PC-9 (cell line): ENCODE measurements at regions of chr6 and their contacts with region 1.

Region 1: DNA sequence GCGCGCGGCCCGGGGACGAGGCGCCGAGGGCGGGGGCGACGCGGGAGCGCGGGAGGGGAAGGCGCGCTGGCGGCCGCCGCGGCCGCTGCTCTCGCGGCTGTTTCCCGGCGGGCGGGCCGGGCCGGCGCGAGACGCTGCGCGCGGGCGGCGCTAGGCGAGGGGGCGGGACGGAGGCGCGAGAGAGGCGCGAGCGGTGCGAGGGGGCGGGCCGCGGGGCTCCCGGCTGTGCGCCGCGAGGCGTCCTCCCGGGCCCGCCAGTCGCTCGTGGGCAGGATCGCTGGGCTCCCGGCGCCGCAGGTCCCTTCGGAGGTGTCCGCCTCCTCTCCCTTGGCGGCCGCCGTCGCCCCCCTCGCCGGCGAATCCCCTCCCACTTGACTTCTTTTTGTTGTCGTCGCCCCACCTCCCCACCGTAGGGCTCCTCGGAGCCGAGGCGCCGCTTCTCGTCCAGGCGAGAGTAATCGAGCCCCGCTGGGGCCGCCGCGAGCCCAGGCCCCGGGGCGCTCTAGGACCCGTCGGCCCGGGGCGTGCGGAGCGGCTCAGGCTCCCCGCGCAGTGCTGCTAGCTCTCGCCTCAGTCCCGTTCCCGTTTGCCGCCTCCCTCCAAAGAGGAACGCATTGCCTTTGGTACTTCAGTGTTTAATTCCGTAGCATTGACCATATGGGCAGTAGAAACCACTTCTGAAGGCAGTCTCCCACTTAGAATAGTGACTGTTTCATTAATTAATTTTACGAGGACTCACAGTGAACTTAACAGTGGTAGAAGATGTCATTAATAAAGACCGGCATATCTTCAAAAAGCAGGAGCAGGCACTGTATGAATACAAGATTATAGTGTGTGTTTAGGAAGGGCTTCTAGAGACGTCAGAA is at the start of gene RANBP9:
- DNase-seq: peak; percentile 61 to 93
- H3K4me3 ChIP-seq: peak within 1 kb of the TSS; percentile 87
- H3K27ac ChIP-seq: peak within 1 kb of the TSS; percentile 83
- H3K4me1 ChIP-seq: peaks cover 56% of the 10 kb centered on the region
- H3K27me3 ChIP-seq: no peaks in the 10 kb centered on the region
- CTCF ChIP-seq: no peak
- total RNA-seq, gene RANBP9: 44.0 and 73.8 TPM in 2 replicates

Region 2: DNA sequence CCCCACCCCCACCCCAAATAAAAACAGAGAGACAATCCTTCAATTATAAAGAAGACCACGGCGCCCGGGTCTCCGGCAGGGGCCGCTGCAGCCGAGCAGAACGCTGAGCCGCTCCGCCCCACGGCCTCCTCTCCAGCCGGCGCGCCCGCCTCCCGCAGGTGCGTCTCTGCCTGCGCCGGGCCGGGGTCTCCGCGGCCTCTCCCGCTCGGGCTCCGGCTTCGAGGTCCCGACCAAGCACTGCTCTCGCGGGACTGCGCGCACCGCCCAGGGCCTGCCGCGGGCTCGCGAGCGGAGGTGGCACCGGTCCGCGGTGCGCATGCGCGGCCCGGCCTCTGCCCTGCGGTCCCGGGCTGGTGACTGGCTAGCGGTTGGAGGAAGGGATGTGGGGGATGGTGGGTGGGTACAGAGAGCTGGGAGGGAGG is 137.8 kb before region 1 on chr6:
- CTCF ChIA-PET with region 1: no interaction called
- POLR2A ChIA-PET with region 1: no interaction called
- intact Hi-C with region 1: no loop called
- DNase-seq: peak; percentile 80 to 96
- H3K4me3 ChIP-seq: peak overlapping the region; percentile 92
- H3K27ac ChIP-seq: peak overlapping the region; percentile 96
- H3K4me1 ChIP-seq: peaks cover 17% of the 10 kb centered on the region
- H3K27me3 ChIP-seq: no peaks in the 10 kb centered on the region
- CTCF ChIP-seq: peak; percentile 52

Region 3: DNA sequence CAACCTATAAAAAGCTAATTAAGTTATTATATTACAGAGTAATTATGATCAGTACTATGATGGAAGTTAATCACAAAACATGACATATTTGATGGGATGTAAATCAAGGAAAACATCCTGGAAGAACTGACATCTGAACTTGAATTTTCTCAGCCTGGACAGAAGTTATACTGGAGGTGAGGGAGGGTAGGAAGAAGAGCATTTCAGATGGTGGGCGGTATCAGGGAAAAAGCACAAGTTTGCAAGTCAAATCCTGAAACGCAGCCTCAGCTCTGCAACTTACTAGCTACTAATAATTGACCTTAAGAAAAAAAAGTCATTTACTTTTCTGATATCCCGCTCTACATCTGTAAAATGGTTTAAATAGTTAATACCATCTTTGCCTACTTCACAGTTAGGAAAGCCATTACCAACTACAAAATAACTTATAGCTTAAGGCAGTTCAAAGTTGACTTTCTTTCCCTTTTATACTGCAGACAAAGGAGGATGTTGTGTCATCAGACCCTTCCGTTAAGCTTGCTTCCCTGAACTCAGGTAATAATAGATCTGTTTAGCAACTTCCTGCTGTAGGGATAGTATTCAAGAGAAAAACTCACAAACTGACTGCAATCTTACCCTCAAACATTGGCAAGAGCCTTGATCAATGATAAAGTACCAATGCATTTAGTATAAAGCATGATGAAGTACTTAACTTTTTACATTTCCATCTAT is 75.9 kb before region 1 on chr6:
- CTCF ChIA-PET with region 1: no interaction called
- POLR2A ChIA-PET with region 1: no interaction called
- intact Hi-C with region 1: loop called (anchors 5 kb)
- DNase-seq: no peak
- H3K4me3 ChIP-seq: no peak overlapping the region
- H3K27ac ChIP-seq: no peak overlapping the region
- H3K4me1 ChIP-seq: no peaks in the 10 kb centered on the region
- H3K27me3 ChIP-seq: no peaks in the 10 kb centered on the region
- CTCF ChIP-seq: no peak

Region 4: DNA sequence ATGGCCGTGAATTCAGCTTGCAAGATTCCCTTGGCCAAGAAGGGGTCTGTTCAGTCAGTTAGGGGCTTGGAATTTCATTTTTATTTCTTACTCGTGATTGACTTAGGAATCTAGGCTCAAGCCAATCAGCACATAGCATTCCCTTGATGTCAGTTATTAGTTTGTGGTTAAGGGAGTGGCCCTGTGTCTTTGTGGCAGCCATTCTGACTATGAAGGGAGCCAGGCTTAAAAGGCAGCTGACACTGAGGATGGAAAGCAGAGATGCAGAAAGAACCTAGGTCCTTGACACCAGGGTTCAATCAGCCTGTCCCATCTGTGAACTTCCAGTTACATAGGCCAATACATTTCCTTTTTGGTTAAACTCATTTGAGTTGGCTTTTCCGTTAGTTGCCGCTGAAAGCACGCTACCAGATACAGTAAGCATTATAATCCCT is 54.3 kb after region 1 on chr6:
- CTCF ChIA-PET with region 1: no interaction called
- POLR2A ChIA-PET with region 1: interaction called, 8 read pairs
- intact Hi-C with region 1: loop called (anchors 1 kb)
- DNase-seq: peak; percentile 37 to 54
- H3K4me3 ChIP-seq: no peak overlapping the region
- H3K27ac ChIP-seq: peak overlapping the region; percentile 30
- H3K4me1 ChIP-seq: peaks cover 12% of the 10 kb centered on the region
- H3K27me3 ChIP-seq: no peaks in the 10 kb centered on the region
- CTCF ChIP-seq: no peak

Region 5: GRCh38 chr6:13795041-13795750 is 83.2 kb after region 1 on chr6:
- CTCF ChIA-PET with region 1: interaction called, 3 read pairs
- POLR2A ChIA-PET with region 1: no interaction called
- intact Hi-C with region 1: loop called (anchors 2 kb)
- DNase-seq: peak; percentile 71 to 77
- H3K4me3 ChIP-seq: no peak overlapping the region
- H3K27ac ChIP-seq: peak overlapping the region; percentile 49
- H3K4me1 ChIP-seq: peaks cover 41% of the 10 kb centered on the region
- H3K27me3 ChIP-seq: no peaks in the 10 kb centered on the region
- CTCF ChIP-seq: peak; percentile 94

Region 6: GRCh38 chr6:13807696-13808095 is 95.7 kb after region 1 on chr6:
- CTCF ChIA-PET with region 1: interaction called, 22 read pairs
- POLR2A ChIA-PET with region 1: no interaction called
- intact Hi-C with region 1: loop called (anchors 5 kb)
- DNase-seq: no peak
- H3K4me3 ChIP-seq: no peak overlapping the region
- H3K27ac ChIP-seq: no peak overlapping the region
- H3K4me1 ChIP-seq: peaks cover 19% of the 10 kb centered on the region
- H3K27me3 ChIP-seq: no peaks in the 10 kb centered on the region
- CTCF ChIP-seq: no peak

Region 7: DNA sequence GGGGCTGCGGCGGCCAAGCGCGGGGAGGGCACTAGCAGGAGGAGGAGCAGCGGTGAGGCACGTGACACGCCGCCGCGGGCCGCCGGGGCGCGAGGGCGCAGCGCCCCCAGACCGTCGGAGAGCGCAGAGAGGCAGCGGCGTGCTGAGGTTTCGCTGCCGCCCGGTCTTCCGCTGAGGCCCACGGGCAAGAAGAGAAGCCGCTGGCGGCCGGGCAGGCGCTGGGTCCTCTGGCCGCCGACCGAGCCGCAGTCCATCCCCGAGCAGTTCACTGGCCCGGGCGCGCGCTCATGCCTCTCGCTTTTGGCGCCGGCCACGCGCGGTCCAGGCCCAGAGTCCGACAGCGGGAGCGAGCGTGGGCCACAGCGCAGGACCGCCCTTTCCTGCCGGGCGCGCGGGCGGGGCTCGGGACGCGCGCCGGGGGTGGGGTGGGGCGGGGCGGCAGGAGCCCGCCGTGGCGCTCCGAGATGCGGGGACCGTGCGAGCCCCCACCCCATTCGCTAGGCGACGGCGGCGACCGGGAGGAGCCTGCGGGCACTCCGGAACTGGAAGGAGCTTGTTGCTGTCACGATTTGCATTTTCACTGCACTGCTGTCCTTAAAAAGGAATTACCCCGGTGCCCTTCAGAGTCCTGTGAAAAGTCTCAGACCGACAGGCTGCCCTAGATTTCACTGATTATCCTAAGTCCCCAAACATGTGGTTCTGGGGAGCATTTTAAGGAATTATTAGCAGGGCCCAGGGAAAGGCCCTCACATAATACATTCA is 102.4 kb after region 1 on chr6 and contains the start of gene MCUR1:
- CTCF ChIA-PET with region 1: no interaction called
- POLR2A ChIA-PET with region 1: interaction called, 4 read pairs
- intact Hi-C with region 1: loop called (anchors 5 kb)
- DNase-seq: peak; percentile 63 to 89
- H3K4me3 ChIP-seq: peak within 1 kb of the TSS; percentile 57
- H3K27ac ChIP-seq: peak within 1 kb of the TSS; percentile 66
- H3K4me1 ChIP-seq: peaks cover 34% of the 10 kb centered on the region
- H3K27me3 ChIP-seq: no peaks in the 10 kb centered on the region
- CTCF ChIP-seq: no peak
- total RNA-seq, gene MCUR1: 38.8 and 45.9 TPM in 2 replicates

Region 8: GRCh38 chr6:13873285-13874190 is 161.6 kb after region 1 on chr6:
- CTCF ChIA-PET with region 1: no interaction called
- POLR2A ChIA-PET with region 1: no interaction called
- intact Hi-C with region 1: loop called (anchors 10 kb)
- DNase-seq: peak; percentile 72 to 91
- H3K4me3 ChIP-seq: peak overlapping the region; percentile 60
- H3K27ac ChIP-seq: peak overlapping the region; percentile 67
- H3K4me1 ChIP-seq: peaks cover 20% of the 10 kb centered on the region
- H3K27me3 ChIP-seq: no peaks in the 10 kb centered on the region
- CTCF ChIP-seq: peak; percentile 89